ENCODE measurements at regions of chr11 and their contacts with region 1.

Region 1: DNA sequence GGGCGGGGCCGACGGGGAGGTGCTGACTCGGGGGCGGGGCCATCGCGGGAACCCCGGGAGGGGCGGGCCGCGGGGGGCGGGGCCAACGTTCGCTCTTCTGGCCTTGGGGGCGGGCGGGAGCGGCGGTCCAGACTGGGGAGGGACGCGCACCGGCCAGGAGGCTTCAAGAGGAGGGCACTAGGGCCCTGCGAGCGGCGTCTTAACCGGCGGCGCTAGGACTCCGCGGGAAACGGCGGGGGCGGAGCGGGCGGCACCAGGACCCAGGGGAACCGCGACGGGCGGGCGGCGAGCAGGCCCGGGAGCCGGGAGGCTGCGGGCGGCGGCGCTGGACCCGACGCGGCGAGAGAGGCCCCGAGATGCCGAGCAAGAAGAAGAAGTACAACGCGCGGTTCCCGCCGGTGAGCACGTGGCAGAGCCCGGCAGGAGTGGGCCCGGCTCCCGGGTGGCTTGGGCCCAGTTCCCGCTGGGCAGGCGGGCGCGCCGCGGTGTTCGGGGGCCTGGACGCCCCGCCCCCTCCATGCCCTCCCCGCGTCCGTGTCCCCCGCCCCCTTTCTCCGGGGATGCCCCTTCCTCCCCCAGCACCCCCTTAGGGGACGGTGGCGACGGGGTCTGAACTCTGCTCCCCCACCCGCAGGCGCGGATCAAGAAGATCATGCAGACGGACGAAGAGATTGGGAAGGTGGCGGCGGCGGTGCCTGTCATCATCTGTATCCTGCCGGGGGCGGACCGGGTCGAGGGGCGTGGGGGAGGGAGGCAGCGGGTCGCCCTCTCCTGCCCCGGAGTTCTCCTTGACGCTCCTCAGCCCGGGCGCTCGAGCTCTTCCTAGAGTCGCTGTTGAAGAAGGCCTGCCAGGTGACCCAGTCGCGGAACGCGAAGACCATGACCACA is at the start of gene DRAP1:
- DNase-seq: peak; percentile 99
- ATAC-seq: peak; percentile 66 to 75
- H3K4me3 ChIP-seq: peak within 1 kb of the TSS; percentile 77 to 95 (median 92)
- H3K27ac ChIP-seq: peak within 1 kb of the TSS; percentile 86 to 98 (median 94)
- H3K4me1 ChIP-seq: peaks cover 47 to 49% of the 10 kb centered on the region in 2 donors
- H3K27me3 ChIP-seq: no peaks in the 10 kb centered on the region
- CTCF ChIP-seq: peak in 3 of 5 experiments; percentile 9 to 46 (median 37)
- POLR2A ChIP-seq: peak; percentile 83 to 84
- total RNA-seq, gene DRAP1: 96.7 to 146 (median 110) TPM

Region 2: GRCh38 chr11:65027213-65028067 is 892.0 kb before region 1 on chr11 and contains the start of gene SNX15:
- in situ Hi-C with region 1: no loop called
- intact Hi-C with region 1: loop called (anchors 5 kb)
- DNase-seq: peak; percentile 92 to 93
- ATAC-seq: peak; percentile 99 to 100
- H3K4me3 ChIP-seq: peak within 1 kb of the TSS; percentile 61 to 73 (median 70)
- H3K27ac ChIP-seq: peak within 1 kb of the TSS; percentile 83 to 94 (median 89)
- H3K4me1 ChIP-seq: peaks cover 12 to 13% of the 10 kb centered on the region in 2 donors
- H3K27me3 ChIP-seq: no peaks in the 10 kb centered on the region
- CTCF ChIP-seq: peak in 4 of 5 experiments; percentile 77 to 88 (median 83)
- POLR2A ChIP-seq: peak; percentile 71 to 82
- total RNA-seq, gene SNX15: 16.9 to 33.3 (median 25.9) TPM

Region 3: GRCh38 chr11:65662799-65663638 is 256.4 kb before region 1 on chr11 and contains the start of gene RELA:
- in situ Hi-C with region 1: no loop called
- intact Hi-C with region 1: loop called (anchors 2 kb)
- DNase-seq: peak; percentile 78 to 89
- ATAC-seq: peak; percentile 90
- H3K4me3 ChIP-seq: peak within 1 kb of the TSS; percentile 65 to 91 (median 78)
- H3K27ac ChIP-seq: peak within 1 kb of the TSS; percentile 91 to 99 (median 96)
- H3K4me1 ChIP-seq: peaks cover 22 to 26% of the 10 kb centered on the region in 2 donors
- H3K27me3 ChIP-seq: no peaks in the 10 kb centered on the region
- CTCF ChIP-seq: peak in 3 of 5 experiments; percentile 11 to 43 (median 29)
- POLR2A ChIP-seq: peak; percentile 82 to 88
- total RNA-seq, gene RELA: 39.7 to 68.3 (median 56.3) TPM

Region 4: GRCh38 chr11:65900125-65900898 is 19.1 kb before region 1 on chr11 and contains the start of gene FOSL1:
- in situ Hi-C with region 1: no loop called
- intact Hi-C with region 1: loop called (anchors 2 kb)
- DNase-seq: peak; percentile 71 to 83
- ATAC-seq: peak; percentile 81 to 88
- H3K4me3 ChIP-seq: peak within 1 kb of the TSS; percentile 43 to 71 (median 64)
- H3K27ac ChIP-seq: peak within 1 kb of the TSS in 3 of 4 donors; percentile 37 to 63 (median 53)
- H3K4me1 ChIP-seq: peaks cover 0 to 10% of the 10 kb centered on the region in 2 donors
- H3K27me3 ChIP-seq: peaks cover 12 to 26% (median 16%) of the 10 kb centered on the region in 3 donors
- CTCF ChIP-seq: no peak
- POLR2A ChIP-seq: peak; percentile 76 to 83
- total RNA-seq, gene FOSL1: 0.36 to 9.3 (median 5.2) TPM

Region 5: GRCh38 chr11:66001942-66002647 is 82.7 kb after region 1 on chr11 and contains the starts of genes BANF1 and EIF1AD:
- in situ Hi-C with region 1: no loop called
- intact Hi-C with region 1: loop called (anchors 2 kb)
- DNase-seq: peak; percentile 91 to 92
- ATAC-seq: peak; percentile 89 to 93
- H3K4me3 ChIP-seq: peak within 1 kb of the TSS; percentile 80 to 97 (median 84)
- H3K27ac ChIP-seq: peak within 1 kb of the TSS; percentile 91 to 99 (median 97)
- H3K4me1 ChIP-seq: peaks cover 29 to 39% of the 10 kb centered on the region in 2 donors
- H3K27me3 ChIP-seq: no peaks in the 10 kb centered on the region
- CTCF ChIP-seq: no peak
- POLR2A ChIP-seq: peak; percentile 50 to 75
- total RNA-seq, gene BANF1: 57.4 to 126 (median 72.1) TPM
- total RNA-seq, gene EIF1AD: 29.3 to 39.8 (median 35.4) TPM